CD14-positive monocyte (primary cell): ENCODE measurements at regions of chr7 and their contacts with region 1.

Region 1: GRCh38 chr7:31261341-31261740 is 79.2 kb downstream of the NEUROD6 start:
- DNase-seq: no peak
- H3K4me3 ChIP-seq: no peak overlapping the region
- H3K4me3 Mint-ChIP-seq: no peak overlapping the region
- H3K27ac ChIP-seq: no peak overlapping the region
- H3K27ac Mint-ChIP-seq: no peak overlapping the region
- H3K4me1 ChIP-seq: no peaks in the 10 kb centered on the region
- H3K4me1 Mint-ChIP-seq: no peaks in the 10 kb centered on the region
- H3K27me3 ChIP-seq: no peaks in the 10 kb centered on the region
- H3K27me3 Mint-ChIP-seq: no peaks in the 10 kb centered on the region
- CTCF ChIP-seq: no peak

Region 2: GRCh38 chr7:31311552-31311951 is 50.2 kb after region 1 on chr7:
- intact Hi-C with region 1: loop called in 1 of 2 experiments (anchors 5 kb)
- DNase-seq: no peak
- H3K4me3 ChIP-seq: no peak overlapping the region
- H3K4me3 Mint-ChIP-seq: no peak overlapping the region
- H3K27ac ChIP-seq: no peak overlapping the region
- H3K27ac Mint-ChIP-seq: no peak overlapping the region
- H3K4me1 ChIP-seq: no peaks in the 10 kb centered on the region
- H3K4me1 Mint-ChIP-seq: no peaks in the 10 kb centered on the region
- H3K27me3 ChIP-seq: no peaks in the 10 kb centered on the region
- H3K27me3 Mint-ChIP-seq: peaks cover 0 to 2% (median 0%) of the 10 kb centered on the region in 3 donors
- CTCF ChIP-seq: no peak